ENCODE measurements at regions of chr7 and their contacts with region 1.

Region 1: GRCh38 chr7:82057476-82057875 is 287.6 kb upstream of the HGF start:
- DNase-seq: no peak
- H3K4me3 ChIP-seq: no peak overlapping the region
- H3K27ac ChIP-seq: no peak overlapping the region
- H3K4me1 ChIP-seq: no peaks in the 10 kb centered on the region
- H3K27me3 ChIP-seq: no peaks in the 10 kb centered on the region
- CTCF ChIP-seq: no peak

Region 2: DNA sequence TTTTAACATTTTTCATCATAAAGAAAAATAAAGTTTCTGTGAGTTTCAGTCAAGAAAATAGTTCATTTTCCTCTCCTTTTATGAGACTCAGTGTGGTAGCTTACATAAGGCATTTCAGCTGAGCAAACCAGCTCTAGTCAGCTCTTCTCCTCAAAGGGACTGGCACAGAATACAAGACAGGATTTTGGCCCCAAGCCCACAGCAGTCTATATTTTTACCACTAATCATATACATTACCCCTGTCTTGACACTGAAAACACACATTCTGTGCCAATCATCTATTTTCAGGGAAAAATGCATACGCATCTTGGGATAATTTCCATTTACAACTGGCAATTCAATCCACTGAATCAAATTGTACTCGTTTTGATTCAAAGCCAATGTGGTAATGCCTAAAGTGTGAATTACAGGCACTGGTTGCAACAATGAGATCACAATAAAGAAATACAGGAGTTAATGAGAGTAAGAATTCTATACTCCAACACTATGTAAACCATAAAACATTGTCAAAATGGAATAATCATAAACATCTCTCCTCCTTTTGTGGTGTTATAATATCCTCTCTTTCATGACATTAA is 199.7 kb after region 1 on chr7:
- CTCF ChIA-PET with region 1: no interaction called
- POLR2A ChIA-PET with region 1: interaction called, 14 read pairs
- intact Hi-C with region 1: no loop called
- DNase-seq: no peak
- H3K4me3 ChIP-seq: no peak overlapping the region
- H3K27ac ChIP-seq: no peak overlapping the region
- H3K4me1 ChIP-seq: no peaks in the 10 kb centered on the region
- H3K27me3 ChIP-seq: no peaks in the 10 kb centered on the region
- CTCF ChIP-seq: no peak

Measured in PC-9 (cell line).